Heart right ventricle (tissue), 16 donors: ENCODE measurements at regions of chr2 and their contacts with region 1.

Region 1: GRCh38 chr2:144516981-144517865 is 2.7 kb downstream of the ZEB2 start:
- DNase-seq: peak; percentile 49 to 68
- ATAC-seq: peak; percentile 15 to 75 (median 38)
- H3K4me3 ChIP-seq: peak overlapping the region; percentile 69 to 98 (median 79)
- H3K27ac ChIP-seq: peak overlapping the region; percentile 96 to 100 (median 98)
- H3K4me1 ChIP-seq: peaks cover 0 to 43% (median 15%) of the 10 kb centered on the region in 9 donors
- H3K27me3 ChIP-seq: peaks cover 0 to 8% (median 3%) of the 10 kb centered on the region in 7 donors
- CTCF ChIP-seq: no peak

Region 2: DNA sequence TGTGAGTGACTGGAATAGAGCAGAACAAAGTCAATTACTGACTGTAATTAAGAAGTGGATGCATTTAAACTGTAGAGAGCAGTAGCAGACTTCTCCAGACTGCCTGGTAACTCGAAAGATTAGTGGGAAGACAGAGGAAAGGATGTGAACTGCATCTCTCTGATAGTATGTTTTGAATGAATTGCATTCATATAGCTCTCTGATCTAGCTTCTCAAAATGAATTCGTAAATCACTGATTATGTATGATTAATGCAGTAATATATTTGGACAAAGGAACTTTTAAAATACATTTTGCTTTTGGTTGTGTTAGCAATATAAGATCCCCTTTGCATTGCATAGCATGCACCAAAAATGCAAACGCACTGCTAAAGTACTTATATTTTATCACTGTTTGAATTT is 1084.0 kb before region 1 on chr2:
- intact Hi-C with region 1: loop called in 1 of 10 experiments (anchors 5 kb)
- DNase-seq: peak in 1 of 2 donors; percentile 6
- ATAC-seq: peak in 5 of 8 donors; percentile 31 to 76 (median 64)
- H3K4me3 ChIP-seq: no peak overlapping the region
- H3K27ac ChIP-seq: peak overlapping the region in 3 of 10 donors; percentile 15 to 46 (median 21)
- H3K4me1 ChIP-seq: peaks cover 0 to 14% (median 0%) of the 10 kb centered on the region in 9 donors
- H3K27me3 ChIP-seq: no peaks in the 10 kb centered on the region
- CTCF ChIP-seq: peak in 4 of 9 donors; percentile 22 to 51 (median 38)

Region 3: DNA sequence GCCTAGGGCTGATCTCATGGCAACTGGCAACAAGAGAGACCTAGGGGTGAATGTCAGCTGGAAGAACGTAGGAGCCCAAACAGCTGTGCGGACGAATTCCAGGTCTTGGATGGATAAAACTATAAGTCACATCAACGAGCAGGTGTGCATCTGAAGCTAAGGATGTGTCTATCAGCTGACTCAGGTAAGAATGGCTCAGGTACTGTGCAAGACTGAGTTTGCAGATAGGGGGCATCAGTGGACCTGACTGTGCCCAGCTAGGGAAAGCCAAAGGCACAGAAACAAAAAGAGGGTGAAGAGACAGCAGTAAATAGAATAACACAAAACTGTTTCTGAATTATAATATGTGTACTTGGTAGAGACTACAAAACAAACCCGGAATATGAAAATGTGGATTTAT is 354.6 kb before region 1 on chr2:
- intact Hi-C with region 1: loop called in 2 of 10 experiments (anchors 10 kb)
- DNase-seq: no peak
- ATAC-seq: no peak
- H3K4me3 ChIP-seq: no peak overlapping the region
- H3K27ac ChIP-seq: no peak overlapping the region
- H3K4me1 ChIP-seq: no peaks in the 10 kb centered on the region
- H3K27me3 ChIP-seq: no peaks in the 10 kb centered on the region
- CTCF ChIP-seq: peak in 7 of 9 donors; percentile 46 to 55 (median 49)

Region 4: GRCh38 chr2:144456680-144457079 is 60.5 kb before region 1 on chr2:
- intact Hi-C with region 1: loop called in 5 of 10 experiments (anchors 5 to 10 kb)
- DNase-seq: peak; percentile 15 to 29
- ATAC-seq: peak; percentile 34 to 90 (median 53)
- H3K4me3 ChIP-seq: no peak overlapping the region
- H3K27ac ChIP-seq: peak overlapping the region in 7 of 10 donors; percentile 18 to 77 (median 26)
- H3K4me1 ChIP-seq: peaks cover 4 to 100% (median 99%) of the 10 kb centered on the region in 9 donors
- H3K27me3 ChIP-seq: no peaks in the 10 kb centered on the region
- CTCF ChIP-seq: no peak

Region 5: DNA sequence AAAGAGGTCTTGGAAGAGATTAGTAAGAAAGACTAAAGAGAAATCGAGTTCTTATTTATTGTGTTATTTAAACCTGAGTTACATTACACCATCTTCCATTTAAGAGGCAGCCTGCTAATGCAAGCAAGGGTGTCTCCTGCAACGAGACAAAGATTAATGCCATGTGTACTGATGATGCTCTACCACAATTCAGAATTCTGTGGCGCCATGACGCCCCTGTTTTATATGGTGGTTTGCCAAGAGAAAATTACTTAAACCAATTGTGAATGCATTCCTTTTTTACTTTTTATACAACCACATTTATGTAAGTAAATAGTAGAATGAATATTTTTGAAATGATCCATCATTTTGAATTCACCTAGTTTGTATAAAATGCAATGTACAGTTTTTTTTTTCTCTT is 358.8 kb after region 1 on chr2:
- intact Hi-C with region 1: loop called in 2 of 10 experiments (anchors 5 kb)
- DNase-seq: no peak
- ATAC-seq: no peak
- H3K4me3 ChIP-seq: no peak overlapping the region
- H3K27ac ChIP-seq: peak overlapping the region in 2 of 10 donors; percentile 2 to 11
- H3K4me1 ChIP-seq: peaks cover 0 to 15% (median 3%) of the 10 kb centered on the region in 9 donors
- H3K27me3 ChIP-seq: no peaks in the 10 kb centered on the region
- CTCF ChIP-seq: no peak

Region 6: DNA sequence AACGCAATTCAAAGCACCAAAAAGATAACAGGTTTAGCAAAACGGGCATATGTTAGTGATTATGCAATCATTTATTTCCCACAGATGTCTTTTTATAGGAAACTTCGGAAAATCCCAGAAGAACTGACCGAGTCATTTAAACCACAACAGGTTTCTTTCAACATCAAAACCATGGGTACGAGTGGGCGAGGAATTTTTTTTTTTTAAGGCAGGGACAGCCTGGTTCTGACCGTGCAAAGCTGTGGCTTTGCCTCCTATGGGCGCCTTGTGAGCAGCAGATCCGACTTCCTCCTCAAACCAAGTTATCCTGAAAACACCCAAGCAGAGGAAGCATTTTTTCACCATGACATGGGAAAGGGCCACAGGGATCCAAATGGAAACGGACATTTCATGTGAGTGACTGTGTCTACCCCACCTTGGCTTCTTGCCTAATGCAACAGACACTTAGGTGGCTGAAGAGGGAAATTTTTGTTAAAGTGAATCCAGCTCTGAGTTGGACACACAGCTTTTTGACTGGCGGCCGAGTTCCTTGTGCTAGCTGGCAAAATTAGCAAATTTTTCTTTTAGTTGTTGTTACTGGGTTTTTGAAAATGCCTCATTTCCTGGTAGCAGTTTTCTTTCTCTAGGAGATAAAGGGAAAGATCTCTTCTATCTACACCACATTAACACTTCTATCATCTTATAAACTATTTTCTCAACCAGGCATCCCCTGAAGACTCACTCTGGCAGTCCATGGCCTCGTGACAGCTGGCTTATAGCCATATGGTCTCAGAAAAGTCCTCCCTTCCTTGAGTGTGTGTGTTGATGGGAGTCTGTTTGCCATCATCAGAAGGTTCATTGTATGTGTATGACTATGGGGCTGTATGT is 490.1 kb after region 1 on chr2:
- intact Hi-C with region 1: loop called in 1 of 10 experiments (anchors 10 kb)
- DNase-seq: peak; percentile 25 to 66
- ATAC-seq: peak; percentile 68 to 91 (median 82)
- H3K4me3 ChIP-seq: no peak overlapping the region
- H3K27ac ChIP-seq: peak overlapping the region in 8 of 10 donors; percentile 31 to 75 (median 63)
- H3K4me1 ChIP-seq: peaks cover 0 to 23% (median 6%) of the 10 kb centered on the region in 9 donors
- H3K27me3 ChIP-seq: no peaks in the 10 kb centered on the region
- CTCF ChIP-seq: no peak